ENCODE measurements at regions of chr9 and their contacts with region 1.

Region 1: GRCh38 chr9:87812375-87813118 is 70.1 kb upstream of the SPATA31E1 start:
- DNase-seq: no peak
- H3K4me3 ChIP-seq: no peak overlapping the region
- H3K27ac ChIP-seq: no peak overlapping the region
- H3K4me1 ChIP-seq: no peaks in the 10 kb centered on the region; a peak in 1 of 7 replicates
- H3K27me3 ChIP-seq: no peaks in the 10 kb centered on the region
- CTCF ChIP-seq: peak; percentile 78 to 99 (median 97)
- EP300 ChIP-seq: no peak
- POLR2A ChIP-seq: no peak
- RAD21 ChIP-seq: peak; percentile 94

Region 2: GRCh38 chr9:87678650-87679515 is 133.7 kb before region 1 on chr9:
- CTCF ChIA-PET with region 1: interaction called, 88 read pairs
- POLR2A ChIA-PET with region 1: no interaction called
- DNase-seq: peak in 1 of 2 experiments; percentile 72
- H3K4me3 ChIP-seq: no peak overlapping the region
- H3K27ac ChIP-seq: no peak overlapping the region
- H3K4me1 ChIP-seq: no peaks in the 10 kb centered on the region
- H3K27me3 ChIP-seq: no peaks in the 10 kb centered on the region
- CTCF ChIP-seq: peak; percentile 24 to 84 (median 77)
- EP300 ChIP-seq: no peak
- POLR2A ChIP-seq: no peak
- RAD21 ChIP-seq: peak; percentile 62 to 71

Region 3: DNA sequence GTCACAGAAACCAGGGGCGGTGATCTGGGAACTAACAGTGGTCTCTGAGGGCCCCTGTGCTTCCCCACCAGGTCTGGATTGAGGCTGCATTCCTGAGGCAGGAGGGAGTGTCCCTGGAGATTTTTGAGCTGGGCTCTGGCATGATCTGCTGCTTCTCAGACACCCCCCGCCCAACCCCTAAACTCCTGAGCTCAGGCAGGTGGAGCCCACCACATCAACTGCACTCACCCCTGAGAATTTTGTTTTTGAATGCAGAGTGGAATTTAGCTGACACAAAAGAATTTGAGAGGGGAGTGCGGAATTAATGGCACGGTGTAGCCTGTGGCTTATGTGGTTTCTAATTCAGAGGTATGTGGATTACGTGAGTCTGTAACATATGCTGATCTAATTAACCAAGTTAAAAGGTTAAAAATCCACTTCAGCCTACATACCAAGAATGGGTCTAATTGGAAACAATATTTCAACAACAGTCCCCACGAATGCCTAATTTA is 110.6 kb before region 1 on chr9:
- CTCF ChIA-PET with region 1: interaction called, 14 read pairs
- POLR2A ChIA-PET with region 1: no interaction called
- DNase-seq: no peak
- H3K4me3 ChIP-seq: no peak overlapping the region
- H3K27ac ChIP-seq: no peak overlapping the region
- H3K4me1 ChIP-seq: 0 out of 7 replicates have a peak, but pooled peaks cover 0 to 4% (median 0%) of the 10 kb centered on the region in 4 experiments
- H3K27me3 ChIP-seq: no peaks in the 10 kb centered on the region
- CTCF ChIP-seq: no peak
- EP300 ChIP-seq: no peak
- POLR2A ChIP-seq: no peak
- RAD21 ChIP-seq: no peak

Region 4: DNA sequence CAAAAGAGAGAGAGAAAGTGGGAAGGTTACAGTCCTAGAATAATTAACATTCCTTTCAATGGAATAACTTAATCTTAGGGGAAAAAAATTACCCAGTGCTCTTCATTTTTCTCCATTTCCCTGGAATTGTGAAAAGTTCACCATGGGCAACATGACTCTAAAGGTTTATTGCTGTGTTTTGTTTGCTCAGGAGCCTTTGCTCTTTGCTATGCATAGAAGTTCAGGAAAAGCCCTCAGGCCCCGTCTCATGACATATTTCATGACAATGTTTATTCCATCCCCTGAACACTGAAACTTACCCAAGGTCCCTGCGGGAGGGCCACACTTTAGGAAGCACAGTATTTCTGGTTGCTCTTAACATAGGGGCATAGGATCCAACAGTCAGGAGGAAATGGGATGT is 96.4 kb before region 1 on chr9:
- CTCF ChIA-PET with region 1: interaction called, 15 read pairs
- POLR2A ChIA-PET with region 1: no interaction called
- DNase-seq: no peak
- H3K4me3 ChIP-seq: no peak overlapping the region
- H3K27ac ChIP-seq: no peak overlapping the region
- H3K4me1 ChIP-seq: no peaks in the 10 kb centered on the region; a peak in 2 of 7 replicates
- H3K27me3 ChIP-seq: no peaks in the 10 kb centered on the region
- CTCF ChIP-seq: no peak
- EP300 ChIP-seq: no peak
- POLR2A ChIP-seq: no peak
- RAD21 ChIP-seq: no peak

Region 5: GRCh38 chr9:87733273-87734052 is 79.1 kb before region 1 on chr9:
- CTCF ChIA-PET with region 1: interaction called, 67 read pairs
- POLR2A ChIA-PET with region 1: no interaction called
- DNase-seq: no peak
- H3K4me3 ChIP-seq: no peak overlapping the region
- H3K27ac ChIP-seq: no peak overlapping the region
- H3K4me1 ChIP-seq: no peaks in the 10 kb centered on the region
- H3K27me3 ChIP-seq: no peaks in the 10 kb centered on the region
- CTCF ChIP-seq: no peak
- EP300 ChIP-seq: no peak
- POLR2A ChIP-seq: no peak
- RAD21 ChIP-seq: no peak

Region 6: DNA sequence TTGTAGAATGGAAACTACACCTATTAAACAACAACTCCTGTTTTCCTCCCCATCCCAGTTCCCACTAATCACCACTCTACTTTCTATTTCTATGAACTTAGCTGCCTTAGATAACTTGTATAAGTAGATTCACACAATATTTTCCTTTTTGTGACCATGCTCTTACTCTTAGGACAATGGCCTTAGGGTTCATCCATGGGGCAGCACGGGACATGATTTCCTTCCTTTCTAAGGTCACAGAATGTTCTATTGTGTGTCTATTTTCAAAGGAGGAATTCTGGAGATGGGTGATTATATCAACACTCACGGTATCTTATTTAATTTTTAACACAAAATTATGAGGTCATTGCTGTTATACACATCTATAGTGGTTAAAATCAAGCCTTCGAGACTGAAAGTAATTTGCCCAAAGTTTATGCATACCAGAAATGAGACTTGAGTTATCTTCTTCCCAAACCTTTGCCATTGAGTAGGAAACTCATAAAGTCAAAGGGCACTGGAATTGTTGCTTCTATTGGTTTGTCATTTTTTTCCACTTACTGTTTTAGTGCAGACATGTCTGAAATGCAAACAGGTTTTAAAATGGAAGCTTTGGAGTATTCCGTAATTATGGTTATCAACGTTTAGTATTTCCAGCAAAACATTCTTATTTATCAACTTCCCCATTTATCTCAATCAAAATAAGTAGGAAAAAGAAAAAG is 63.1 kb before region 1 on chr9:
- CTCF ChIA-PET with region 1: no interaction called
- POLR2A ChIA-PET with region 1: no interaction called
- DNase-seq: no peak
- H3K4me3 ChIP-seq: no peak overlapping the region
- H3K27ac ChIP-seq: no peak overlapping the region
- H3K4me1 ChIP-seq: peaks cover 2 to 8% (median 3%) of the 10 kb centered on the region in 4 experiments; a peak in 4 of 7 replicates
- H3K27me3 ChIP-seq: no peaks in the 10 kb centered on the region; a peak in 1 of 7 replicates
- CTCF ChIP-seq: no peak
- EP300 ChIP-seq: no peak
- POLR2A ChIP-seq: no peak
- RAD21 ChIP-seq: no peak

Region 7: DNA sequence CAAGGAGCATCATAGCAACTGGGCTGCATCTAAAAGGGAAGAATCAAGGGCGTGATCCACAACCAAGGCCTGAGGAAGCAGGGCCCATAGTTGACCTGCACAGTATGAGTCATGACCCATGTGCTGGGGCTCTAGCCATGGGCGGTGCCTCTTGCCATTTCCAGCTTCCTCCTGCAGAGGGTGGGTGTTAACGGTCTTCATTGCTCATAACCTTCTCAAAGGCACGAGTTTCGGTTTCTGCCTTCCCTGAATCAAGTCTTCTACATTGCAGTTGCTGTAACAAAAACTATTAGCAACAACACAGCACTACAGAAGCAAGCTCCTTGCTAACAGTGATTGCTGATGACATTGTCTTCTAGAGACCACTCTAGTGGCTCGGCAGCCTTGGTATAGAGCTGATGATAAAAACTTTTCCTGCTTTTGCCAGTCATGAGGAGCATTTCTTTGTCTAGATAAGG is 19.7 kb before region 1 on chr9:
- CTCF ChIA-PET with region 1: interaction called, 19 read pairs
- POLR2A ChIA-PET with region 1: no interaction called
- DNase-seq: no peak
- H3K4me3 ChIP-seq: no peak overlapping the region
- H3K27ac ChIP-seq: no peak overlapping the region
- H3K4me1 ChIP-seq: no peaks in the 10 kb centered on the region
- H3K27me3 ChIP-seq: no peaks in the 10 kb centered on the region
- CTCF ChIP-seq: peak in 2 of 3 experiments; percentile 1 to 25; a peak in 1 of 4 replicates
- EP300 ChIP-seq: no peak
- POLR2A ChIP-seq: no peak
- RAD21 ChIP-seq: peak in 1 of 2 experiments; percentile 20; a peak in 1 of 4 replicates

Region 8: DNA sequence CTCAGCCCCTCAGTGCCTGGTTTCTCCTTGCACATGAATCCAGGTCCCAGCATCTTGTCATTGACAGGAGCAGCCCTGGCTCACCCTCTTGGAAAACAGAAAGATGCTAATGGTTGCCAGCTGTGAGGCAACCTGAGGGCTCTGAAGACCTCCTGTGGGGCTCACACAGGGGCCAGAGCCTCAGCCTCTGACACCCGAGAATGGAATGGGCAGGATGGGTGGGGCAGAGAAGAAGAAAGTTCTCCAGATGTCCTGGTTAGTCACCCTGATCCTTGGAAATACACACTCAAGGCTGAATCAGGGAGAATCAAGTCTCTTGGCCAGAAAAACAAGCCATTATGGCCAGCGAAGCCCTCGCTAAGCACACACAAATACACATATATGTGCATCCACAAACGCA is 37.8 kb after region 1 on chr9:
- CTCF ChIA-PET with region 1: no interaction called
- POLR2A ChIA-PET with region 1: no interaction called
- DNase-seq: no peak
- H3K4me3 ChIP-seq: no peak overlapping the region
- H3K27ac ChIP-seq: no peak overlapping the region
- H3K4me1 ChIP-seq: peaks cover 0 to 3% (median 0%) of the 10 kb centered on the region in 4 experiments; a peak in 3 of 7 replicates
- H3K27me3 ChIP-seq: no peaks in the 10 kb centered on the region
- CTCF ChIP-seq: no peak
- EP300 ChIP-seq: no peak
- POLR2A ChIP-seq: no peak
- RAD21 ChIP-seq: no peak

Measured in H1 (cell line).